Esophagus muscularis mucosa (tissue), 4 donors: ENCODE measurements at regions of chr18 and their contacts with region 1.

Region 1: DNA sequence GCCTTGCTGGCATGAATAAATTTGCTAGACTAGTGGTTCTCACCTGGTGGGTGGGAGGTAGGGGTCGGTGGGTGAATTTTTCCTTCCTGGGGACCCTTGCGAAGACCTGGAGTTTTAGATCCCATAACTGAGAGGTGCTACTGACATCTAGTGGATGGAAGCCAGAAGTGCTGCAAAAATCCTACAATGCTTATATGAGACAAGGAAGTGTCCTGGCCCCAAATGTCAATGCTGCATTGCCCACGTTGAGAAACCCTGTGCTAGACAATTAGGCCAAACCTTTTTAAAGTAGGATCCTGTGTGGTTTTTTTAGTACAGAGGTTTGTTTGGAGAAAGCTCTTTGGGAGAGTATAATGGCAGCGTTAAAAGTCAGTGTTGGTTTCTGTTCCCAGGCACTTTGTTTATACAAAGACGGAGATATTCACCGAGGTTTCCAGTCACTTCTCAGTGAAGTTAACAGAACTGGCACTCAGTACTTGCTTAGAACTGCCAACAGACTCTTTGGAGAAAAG is 9.6 kb downstream of the SERPINB8 start:
- DNase-seq: no peak
- H3K4me3 ChIP-seq: peak overlapping the region; percentile 29 to 43 (median 42)
- H3K27ac ChIP-seq: peak overlapping the region; percentile 49 to 78 (median 68)
- H3K4me1 ChIP-seq: peaks cover 0 to 16% (median 14%) of the 10 kb centered on the region in 4 donors
- H3K27me3 ChIP-seq: no peaks in the 10 kb centered on the region
- CTCF ChIP-seq: peak; percentile 84 to 92 (median 85)
- EP300 ChIP-seq: no peak
- POLR2A ChIP-seq: no peak

Region 2: GRCh38 chr18:63963615-63964256 is 15.7 kb before region 1 on chr18:
- intact Hi-C with region 1: loop called (anchors 2 kb)
- DNase-seq: no peak
- H3K4me3 ChIP-seq: no peak overlapping the region
- H3K27ac ChIP-seq: no peak overlapping the region
- H3K4me1 ChIP-seq: peaks cover 0 to 3% (median 0%) of the 10 kb centered on the region in 4 donors
- H3K27me3 ChIP-seq: peaks cover 0 to 12% (median 0%) of the 10 kb centered on the region in 4 donors
- CTCF ChIP-seq: peak; percentile 65 to 86 (median 72)
- EP300 ChIP-seq: no peak
- POLR2A ChIP-seq: no peak